ENCODE measurements at regions of chr7 and their contacts with region 1.

Region 1: DNA sequence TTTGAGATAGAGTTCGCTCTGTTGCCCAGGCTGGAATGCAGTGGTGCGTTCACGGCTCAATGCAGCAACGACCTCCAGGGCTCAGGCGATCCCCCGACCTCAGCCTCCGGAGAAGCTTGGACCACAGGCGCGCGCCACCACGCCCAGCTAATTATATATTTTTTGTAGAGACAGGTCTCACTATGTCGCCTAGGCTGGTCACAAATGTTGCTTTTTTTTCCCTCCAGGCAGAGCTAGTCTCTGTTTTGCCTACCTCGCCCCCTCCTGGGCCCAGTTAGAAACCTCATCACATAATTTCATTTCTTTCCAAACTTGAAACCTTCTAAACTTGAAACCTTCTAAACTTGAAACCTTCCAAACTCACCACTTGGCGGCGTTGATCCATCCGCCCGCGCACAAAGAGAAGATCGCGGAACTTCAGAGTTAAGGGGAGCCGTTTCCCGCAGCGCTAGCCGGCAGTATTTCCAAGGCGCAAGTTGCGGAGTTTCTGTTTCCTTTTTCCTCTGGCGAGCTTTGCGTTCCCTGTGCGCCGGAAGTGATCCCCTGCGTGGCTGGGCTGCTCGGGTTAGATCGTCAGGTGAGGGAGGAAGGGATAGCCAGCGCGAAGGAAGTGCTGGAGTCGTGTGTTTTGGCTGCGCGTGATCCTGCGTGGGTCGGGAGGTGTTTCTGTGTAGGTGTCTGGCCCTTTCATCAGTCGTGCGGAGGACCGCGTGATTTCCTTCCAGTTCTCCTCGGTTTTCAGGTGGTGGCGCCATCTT is at the start of gene SSBP1:
- DNase-seq: peak; percentile 99
- H3K4me3 ChIP-seq: peak within 1 kb of the TSS; percentile 74 to 99 (median 96)
- H3K27ac ChIP-seq: peak within 1 kb of the TSS; percentile 92
- H3K4me1 ChIP-seq: peaks cover 16% of the 10 kb centered on the region
- H3K27me3 ChIP-seq: no peaks in the 10 kb centered on the region
- CTCF ChIP-seq: peak; percentile 76 to 86
- POLR2A ChIP-seq: peak; percentile 89
- total RNA-seq, gene SSBP1: 164 and 169 TPM in 2 replicates

Region 2: DNA sequence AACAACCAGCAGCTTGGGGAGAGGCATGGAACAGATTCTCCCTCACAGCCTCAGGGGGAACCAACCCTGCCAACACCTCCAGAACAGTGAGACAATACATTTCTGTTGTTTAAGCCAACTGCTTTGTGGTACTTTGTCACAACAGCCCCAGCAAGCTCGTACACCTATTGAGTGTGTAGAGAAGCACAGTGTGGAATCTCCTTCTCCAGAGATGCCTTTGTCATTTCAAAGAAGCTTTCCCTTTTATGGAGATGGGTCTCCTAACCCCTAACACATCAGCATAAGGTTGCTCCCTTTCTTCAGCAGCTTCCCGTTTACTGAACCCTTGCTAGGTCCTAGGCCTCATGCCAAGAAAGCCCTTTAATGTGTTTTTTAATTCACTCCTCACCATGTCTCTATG is 247.5 kb before region 1 on chr7:
- CTCF ChIA-PET with region 1: no interaction called
- POLR2A ChIA-PET with region 1: no interaction called
- dilution Hi-C with region 1: no loop called
- intact Hi-C with region 1: no loop called
- DNase-seq: no peak
- H3K4me3 ChIP-seq: no peak overlapping the region
- H3K27ac ChIP-seq: no peak overlapping the region
- H3K4me1 ChIP-seq: no peaks in the 10 kb centered on the region
- H3K27me3 ChIP-seq: no peaks in the 10 kb centered on the region
- CTCF ChIP-seq: no peak
- POLR2A ChIP-seq: no peak

Region 3: DNA sequence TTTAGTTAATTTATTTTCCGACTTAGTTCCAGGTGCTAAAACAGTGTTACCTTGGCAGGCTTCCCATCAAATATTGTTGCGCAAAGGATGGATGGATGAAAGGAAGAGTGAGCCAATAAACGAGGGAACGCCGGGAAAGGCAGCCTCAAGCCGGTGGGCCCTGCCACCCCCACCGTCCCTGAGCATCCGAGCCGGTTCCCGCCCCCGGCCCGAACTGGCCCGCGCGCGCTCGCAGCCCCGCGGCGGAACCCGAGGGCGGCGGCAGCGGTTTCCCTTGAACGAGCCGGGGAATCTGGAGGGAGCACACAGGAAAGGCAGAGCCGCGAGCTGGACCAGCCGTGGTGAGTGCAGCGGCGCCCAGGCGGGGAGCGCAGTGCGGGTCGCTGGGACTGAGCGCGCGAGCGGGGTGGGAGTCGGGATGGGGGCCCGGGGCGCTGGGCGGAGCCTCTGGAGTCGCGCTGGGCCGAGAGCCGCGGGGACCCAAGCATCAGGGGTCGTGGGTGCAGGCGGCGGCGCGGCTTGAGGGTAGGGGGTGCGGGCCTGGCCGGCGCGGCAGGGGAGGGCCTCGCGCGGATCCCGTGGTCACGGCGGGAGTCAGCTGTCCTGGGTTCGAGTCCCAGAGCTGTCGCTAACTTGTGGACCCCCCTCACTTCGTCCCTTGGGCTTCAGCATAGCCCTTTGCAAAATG is 186.8 kb before region 1 on chr7 and contains the start of gene AGK:
- CTCF ChIA-PET with region 1: interaction called, 4 read pairs
- POLR2A ChIA-PET with region 1: no interaction called
- dilution Hi-C with region 1: no loop called
- intact Hi-C with region 1: loop called (anchors 1 kb)
- DNase-seq: peak; percentile 75
- H3K4me3 ChIP-seq: peak within 1 kb of the TSS; percentile 60 to 97 (median 82)
- H3K27ac ChIP-seq: peak within 1 kb of the TSS; percentile 38
- H3K4me1 ChIP-seq: peaks cover 13% of the 10 kb centered on the region
- H3K27me3 ChIP-seq: no peaks in the 10 kb centered on the region
- CTCF ChIP-seq: no peak
- POLR2A ChIP-seq: peak; percentile 79
- total RNA-seq, gene AGK: 33.9 and 34.3 TPM in 2 replicates

Region 4: GRCh38 chr7:141663081-141663849 is 74.7 kb before region 1 on chr7:
- CTCF ChIA-PET with region 1: interaction called, 13 read pairs
- POLR2A ChIA-PET with region 1: no interaction called
- dilution Hi-C with region 1: no loop called
- intact Hi-C with region 1: no loop called
- DNase-seq: peak; percentile 90
- H3K4me3 ChIP-seq: no peak overlapping the region
- H3K27ac ChIP-seq: peak overlapping the region; percentile 76
- H3K4me1 ChIP-seq: peaks cover 24% of the 10 kb centered on the region
- H3K27me3 ChIP-seq: no peaks in the 10 kb centered on the region
- CTCF ChIP-seq: no peak
- POLR2A ChIP-seq: peak; percentile 17

Region 5: GRCh38 chr7:141701489-141702046 is 36.4 kb before region 1 on chr7:
- CTCF ChIA-PET with region 1: interaction called, 30 read pairs
- POLR2A ChIA-PET with region 1: no interaction called
- dilution Hi-C with region 1: no loop called
- intact Hi-C with region 1: loop called (anchors 1 kb)
- DNase-seq: peak; percentile 43
- H3K4me3 ChIP-seq: peak overlapping the region; percentile 63 to 92 (median 84)
- H3K27ac ChIP-seq: peak overlapping the region; percentile 16
- H3K4me1 ChIP-seq: peaks cover 10% of the 10 kb centered on the region
- H3K27me3 ChIP-seq: peaks cover 5 to 15% of the 10 kb centered on the region in 2 experiments
- CTCF ChIP-seq: no peak
- POLR2A ChIP-seq: no peak